ENCODE measurements at regions of chr3 and their contacts with region 1.

Region 1: DNA sequence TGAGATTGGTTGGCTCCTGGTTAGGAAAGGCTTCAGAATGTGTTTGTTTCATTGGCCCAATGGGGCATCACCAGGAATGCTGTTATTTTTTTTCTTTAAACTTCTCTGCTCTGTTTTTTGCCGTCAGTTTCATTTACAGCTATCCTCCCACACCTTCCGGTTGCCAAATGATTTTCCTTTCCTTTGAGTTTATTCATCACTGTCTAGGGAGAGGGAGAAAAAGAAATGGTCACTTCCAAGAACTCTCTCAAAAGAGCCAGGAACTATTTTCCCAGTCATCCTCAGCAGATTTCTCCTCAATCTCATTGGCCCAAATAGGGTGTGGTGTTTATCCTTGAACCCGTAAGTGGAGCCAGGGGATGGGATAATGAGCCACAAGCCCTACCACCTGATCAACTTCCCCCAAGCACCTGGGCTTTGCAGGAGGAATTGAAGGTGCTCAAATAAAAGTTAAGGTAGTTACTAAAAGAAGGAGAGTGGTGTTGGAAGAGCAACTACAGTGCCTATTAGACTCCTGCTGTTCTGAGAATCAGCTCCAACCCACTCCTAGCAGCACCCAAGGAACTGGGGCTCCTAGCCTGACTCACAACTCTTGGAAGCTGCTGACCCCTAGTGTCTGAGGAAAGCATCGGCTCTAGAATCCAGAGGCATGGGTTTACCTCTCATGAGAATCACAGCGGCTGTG is 183.8 kb upstream of the IL12A start:
- DNase-seq: peak; percentile 93
- H3K4me3 Mint-ChIP-seq: no peak overlapping the region
- H3K27ac Mint-ChIP-seq: no peak overlapping the region
- H3K4me1 Mint-ChIP-seq: peaks cover 32% of the 10 kb centered on the region
- H3K27me3 Mint-ChIP-seq: no peaks in the 10 kb centered on the region
- CTCF ChIP-seq: peak; percentile 91

Region 2: GRCh38 chr3:159609625-159610024 is 195.2 kb before region 1 on chr3:
- CTCF ChIA-PET with region 1: interaction called, 50 read pairs
- POLR2A ChIA-PET with region 1: no interaction called
- intact Hi-C with region 1: no loop called
- DNase-seq: no peak
- H3K4me3 Mint-ChIP-seq: no peak overlapping the region
- H3K27ac Mint-ChIP-seq: no peak overlapping the region
- H3K4me1 Mint-ChIP-seq: no peaks in the 10 kb centered on the region
- H3K27me3 Mint-ChIP-seq: no peaks in the 10 kb centered on the region
- CTCF ChIP-seq: no peak

Region 3: GRCh38 chr3:159634483-159634882 is 170.4 kb before region 1 on chr3:
- CTCF ChIA-PET with region 1: interaction called, 13 read pairs
- POLR2A ChIA-PET with region 1: no interaction called
- intact Hi-C with region 1: no loop called
- DNase-seq: peak; percentile 38
- H3K4me3 Mint-ChIP-seq: no peak overlapping the region
- H3K27ac Mint-ChIP-seq: peak overlapping the region; percentile 42
- H3K4me1 Mint-ChIP-seq: peaks cover 40% of the 10 kb centered on the region
- H3K27me3 Mint-ChIP-seq: no peaks in the 10 kb centered on the region
- CTCF ChIP-seq: no peak

Region 4: GRCh38 chr3:159732172-159733111 is 72.4 kb before region 1 on chr3:
- CTCF ChIA-PET with region 1: interaction called, 41 read pairs
- POLR2A ChIA-PET with region 1: interaction called, 4 read pairs
- intact Hi-C with region 1: no loop called
- DNase-seq: peak; percentile 73
- H3K4me3 Mint-ChIP-seq: peak overlapping the region; percentile 81
- H3K27ac Mint-ChIP-seq: peak overlapping the region; percentile 50
- H3K4me1 Mint-ChIP-seq: peaks cover 19% of the 10 kb centered on the region
- H3K27me3 Mint-ChIP-seq: no peaks in the 10 kb centered on the region
- CTCF ChIP-seq: no peak

Region 5: DNA sequence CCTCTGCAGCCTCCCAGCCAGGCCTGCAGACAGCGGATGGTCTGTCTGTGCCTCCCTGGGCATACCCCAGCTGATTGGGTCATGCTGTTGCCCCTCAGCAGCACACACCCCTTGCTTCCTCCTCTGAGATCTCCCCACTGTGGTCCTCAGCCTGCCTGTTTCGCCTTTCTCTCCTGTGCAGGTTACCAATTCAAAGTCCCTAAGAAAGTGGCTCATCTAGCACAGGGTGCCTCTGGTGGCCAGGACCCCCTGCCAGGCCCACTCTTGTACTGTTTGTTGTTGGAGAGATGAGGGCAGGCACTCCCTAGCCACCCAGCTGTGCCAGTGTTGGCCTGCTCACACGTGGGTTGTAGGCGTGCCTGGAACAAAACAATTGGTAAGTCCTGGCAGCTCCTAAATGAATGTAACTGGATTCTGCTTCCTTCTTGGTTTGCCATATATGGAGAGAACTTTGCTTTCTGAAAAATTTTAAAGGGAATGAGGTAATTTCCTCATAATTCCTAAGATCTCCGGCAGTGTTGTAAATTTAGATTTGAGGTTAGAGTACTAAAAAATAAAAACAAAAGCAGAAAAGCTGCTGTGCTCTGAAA is 29.4 kb before region 1 on chr3:
- CTCF ChIA-PET with region 1: interaction called, 169 read pairs
- POLR2A ChIA-PET with region 1: interaction called, 4 read pairs
- intact Hi-C with region 1: no loop called
- DNase-seq: peak; percentile 80
- H3K4me3 Mint-ChIP-seq: no peak overlapping the region
- H3K27ac Mint-ChIP-seq: peak overlapping the region; percentile 84
- H3K4me1 Mint-ChIP-seq: peaks cover 33% of the 10 kb centered on the region
- H3K27me3 Mint-ChIP-seq: no peaks in the 10 kb centered on the region
- CTCF ChIP-seq: no peak

Region 6: DNA sequence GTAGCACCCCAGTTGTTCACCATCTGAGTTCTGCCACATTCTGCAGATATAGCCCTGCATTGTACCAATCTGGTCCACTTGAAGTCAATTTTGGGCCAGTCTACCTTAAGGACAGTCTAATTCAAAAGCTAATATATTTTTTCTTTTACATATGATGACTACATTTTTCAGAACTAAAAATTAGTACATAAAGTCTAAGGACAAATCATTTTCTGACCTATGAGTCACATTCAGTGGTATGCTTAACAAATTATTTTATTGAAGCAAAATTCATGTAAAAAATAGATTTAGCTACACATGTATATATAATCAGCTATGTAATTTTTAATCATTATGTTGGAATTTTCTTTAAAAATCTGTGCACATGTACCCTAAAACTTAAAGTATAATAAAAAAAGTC is 131.7 kb after region 1 on chr3:
- CTCF ChIA-PET with region 1: no interaction called
- POLR2A ChIA-PET with region 1: no interaction called
- intact Hi-C with region 1: no loop called
- DNase-seq: no peak
- H3K4me3 Mint-ChIP-seq: no peak overlapping the region
- H3K27ac Mint-ChIP-seq: no peak overlapping the region
- H3K4me1 Mint-ChIP-seq: peaks cover 16% of the 10 kb centered on the region
- H3K27me3 Mint-ChIP-seq: no peaks in the 10 kb centered on the region
- CTCF ChIP-seq: no peak

Region 7: DNA sequence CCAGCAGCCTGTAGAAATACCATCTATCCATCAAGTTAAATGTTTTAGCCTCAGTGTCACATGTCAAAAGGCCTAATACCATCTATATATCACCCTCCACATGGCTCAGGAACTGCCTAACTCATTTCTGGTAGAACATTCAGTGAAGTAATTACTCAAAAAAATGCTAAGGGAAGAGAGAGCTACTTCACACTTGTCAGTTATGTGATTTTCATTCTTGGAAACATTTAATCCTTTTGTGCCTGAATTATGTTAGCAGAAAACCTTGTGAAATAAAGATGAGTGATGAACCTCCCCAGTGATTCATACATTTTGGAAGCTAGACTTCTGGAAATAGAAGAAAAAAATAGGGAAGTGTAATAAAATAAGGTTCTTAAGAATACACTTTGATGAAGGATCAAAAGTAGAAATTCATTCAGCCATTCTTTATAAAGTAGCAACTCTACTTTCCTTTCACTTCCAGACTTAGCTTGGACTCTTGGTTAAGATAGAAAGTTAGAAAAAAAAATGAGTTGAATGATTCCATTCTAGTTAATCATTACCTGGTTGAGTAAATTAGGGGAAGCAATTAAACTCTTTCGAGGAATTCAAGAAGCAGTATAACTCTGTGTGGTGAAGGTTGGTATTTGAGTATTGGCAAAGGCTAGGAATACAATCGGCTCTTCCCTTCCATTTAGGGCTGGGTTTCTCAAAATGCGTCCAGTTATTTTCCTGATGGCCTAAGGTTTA is 1695.4 kb after region 1 on chr3:
- CTCF ChIA-PET with region 1: no interaction called
- POLR2A ChIA-PET with region 1: no interaction called
- intact Hi-C with region 1: no loop called
- DNase-seq: peak; percentile 28
- H3K4me3 Mint-ChIP-seq: no peak overlapping the region
- H3K27ac Mint-ChIP-seq: peak overlapping the region; percentile 46
- H3K4me1 Mint-ChIP-seq: peaks cover 10% of the 10 kb centered on the region
- H3K27me3 Mint-ChIP-seq: no peaks in the 10 kb centered on the region
- CTCF ChIP-seq: no peak

Measured in MCF 10A (cell line).